Activated B cell treated with CpG ODN at 0.5 μM for 24 hours (primary cell): ENCODE measurements at regions of chr17 and their contacts with region 1.

Region 1: DNA sequence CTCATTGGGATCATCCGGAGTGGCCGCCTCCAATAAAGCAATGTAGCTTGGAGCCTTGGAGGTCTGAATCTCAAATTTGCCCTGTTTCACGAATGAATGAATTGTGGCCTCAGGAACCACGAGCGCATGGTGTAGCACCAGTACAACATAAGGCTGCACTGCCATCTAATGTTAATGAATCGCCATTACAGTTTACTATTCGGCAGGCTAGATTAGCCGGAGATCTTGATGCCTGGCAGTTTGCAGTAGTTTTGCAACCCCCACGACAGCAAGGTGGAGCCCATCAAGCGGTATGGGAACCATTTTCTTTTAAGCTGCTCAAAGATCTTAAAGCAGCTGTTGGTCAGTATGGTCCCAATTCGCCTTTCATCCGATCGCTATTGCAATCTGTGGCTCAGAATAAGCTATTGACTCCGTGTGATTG is 18.8 kb downstream of the ALOX15B start:
- DNase-seq: no peak
- ATAC-seq: peak; percentile 80
- H3K4me3 Mint-ChIP-seq: no peak overlapping the region
- H3K27ac Mint-ChIP-seq: no peak overlapping the region
- H3K4me1 Mint-ChIP-seq: peaks cover 25% of the 10 kb centered on the region
- H3K27me3 Mint-ChIP-seq: peaks cover 19% of the 10 kb centered on the region
- CTCF ChIP-seq: no peak

Region 2: DNA sequence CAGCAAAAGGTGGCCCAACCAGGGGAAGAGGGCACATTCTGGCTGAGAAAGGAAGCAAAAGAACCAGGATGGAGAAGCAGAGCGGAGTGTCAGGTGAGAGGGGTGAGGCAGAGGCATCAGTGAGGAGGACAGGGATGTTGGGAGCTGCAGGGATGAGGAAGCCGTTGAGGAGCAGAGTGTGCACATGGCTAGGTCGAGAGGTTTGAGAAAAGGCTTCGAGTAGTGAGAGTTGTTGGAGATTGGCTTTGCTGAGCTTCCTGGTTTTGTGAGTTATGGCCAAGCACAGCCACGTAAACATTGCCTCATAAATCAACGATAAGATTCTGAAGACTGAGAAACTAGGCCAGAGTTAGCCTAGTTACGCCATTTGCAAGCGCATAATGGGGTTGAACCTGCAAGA is 313.3 kb before region 1 on chr17:
- CTCF ChIA-PET with region 1: interaction called, 23 read pairs
- POLR2A ChIA-PET with region 1: no interaction called
- intact Hi-C with region 1: loop called (anchors 1 kb)
- DNase-seq: no peak
- ATAC-seq: no peak
- H3K4me3 Mint-ChIP-seq: no peak overlapping the region
- H3K27ac Mint-ChIP-seq: no peak overlapping the region
- H3K4me1 Mint-ChIP-seq: no peaks in the 10 kb centered on the region
- H3K27me3 Mint-ChIP-seq: peaks cover 13% of the 10 kb centered on the region
- CTCF ChIP-seq: no peak

Region 3: DNA sequence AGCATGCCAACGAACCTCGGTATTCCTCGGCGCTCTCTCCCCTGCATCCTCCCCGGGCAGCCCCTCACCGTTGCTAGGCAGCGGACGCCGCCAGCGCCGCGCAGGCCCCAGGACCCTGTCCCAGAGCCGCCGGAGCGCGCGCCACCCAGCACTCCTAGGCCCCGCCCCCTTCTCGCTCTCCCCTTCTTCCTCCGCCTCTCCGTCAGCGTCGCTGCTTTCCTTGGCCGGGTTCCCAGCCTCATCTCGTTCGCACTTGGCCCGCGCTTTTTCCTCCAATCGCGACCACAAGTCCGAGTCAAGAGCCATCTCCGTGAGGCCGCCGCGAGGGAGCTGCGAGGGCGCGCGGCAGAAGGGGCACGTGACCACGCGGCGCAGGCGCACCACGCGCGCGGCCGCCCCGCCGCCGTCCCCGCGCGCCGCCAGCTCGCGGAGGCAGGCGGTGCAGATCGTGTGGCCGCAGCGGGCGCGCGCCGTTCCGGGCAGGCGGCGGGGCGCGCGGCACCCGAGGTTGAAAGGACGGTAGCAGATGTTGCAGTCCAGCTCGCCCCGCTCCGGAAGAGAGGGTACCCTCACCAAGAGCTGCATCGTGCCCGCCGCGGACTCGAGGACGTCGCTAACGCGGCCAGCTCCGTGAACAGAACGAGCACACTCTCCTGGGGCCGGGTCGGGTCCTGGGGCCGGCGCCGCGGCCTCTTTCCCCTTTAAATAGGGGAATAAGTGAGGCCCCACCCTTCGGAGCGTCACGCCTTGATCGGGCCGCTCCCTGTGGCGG is 141.9 kb before region 1 on chr17 and contains the start of gene RNF227:
- CTCF ChIA-PET with region 1: interaction called, 12 read pairs
- POLR2A ChIA-PET with region 1: interaction called, 3 read pairs
- intact Hi-C with region 1: loop called (anchors 1 kb)
- DNase-seq: peak; percentile 81
- ATAC-seq: peak; percentile 83
- H3K4me3 Mint-ChIP-seq: peak within 1 kb of the TSS; percentile 91
- H3K27ac Mint-ChIP-seq: peak within 1 kb of the TSS; percentile 87
- H3K4me1 Mint-ChIP-seq: peaks cover 23% of the 10 kb centered on the region
- H3K27me3 Mint-ChIP-seq: no peaks in the 10 kb centered on the region
- CTCF ChIP-seq: no peak
- total RNA-seq, gene RNF227: 2.5 and 2.8 TPM in 2 replicates

Region 4: GRCh38 chr17:8073627-8074484 is 16.2 kb after region 1 on chr17:
- CTCF ChIA-PET with region 1: interaction called, 52 read pairs
- POLR2A ChIA-PET with region 1: interaction called, 4 read pairs
- intact Hi-C with region 1: loop called (anchors 1 kb)
- DNase-seq: peak; percentile 83
- ATAC-seq: peak; percentile 99
- H3K4me3 Mint-ChIP-seq: peak overlapping the region; percentile 78
- H3K27ac Mint-ChIP-seq: peak overlapping the region; percentile 78
- H3K4me1 Mint-ChIP-seq: peaks cover 31% of the 10 kb centered on the region
- H3K27me3 Mint-ChIP-seq: peaks cover 45% of the 10 kb centered on the region
- CTCF ChIP-seq: peak; percentile 56

Region 5: DNA sequence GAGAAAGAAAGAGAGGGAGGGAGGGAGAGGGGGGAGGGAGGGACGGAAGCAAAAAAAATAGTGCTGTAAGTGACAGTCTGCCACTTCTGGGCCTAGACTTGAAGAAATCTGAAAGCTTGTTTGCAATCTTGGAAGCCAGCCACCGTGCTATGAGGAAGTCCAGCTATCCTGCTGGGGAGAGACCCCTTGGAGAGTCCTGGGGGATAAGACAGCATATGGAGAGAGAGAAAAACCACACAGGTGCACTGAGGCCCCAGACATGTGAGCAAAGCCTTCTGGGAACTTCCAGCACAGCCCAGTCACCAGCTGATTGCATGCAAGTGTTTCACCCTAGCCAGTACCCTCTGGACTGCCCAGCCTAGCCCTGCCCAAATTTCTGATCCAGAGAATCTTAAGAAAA is 42.4 kb after region 1 on chr17:
- CTCF ChIA-PET with region 1: no interaction called
- POLR2A ChIA-PET with region 1: no interaction called
- intact Hi-C with region 1: no loop called
- DNase-seq: no peak
- ATAC-seq: no peak
- H3K4me3 Mint-ChIP-seq: no peak overlapping the region
- H3K27ac Mint-ChIP-seq: no peak overlapping the region
- H3K4me1 Mint-ChIP-seq: no peaks in the 10 kb centered on the region
- H3K27me3 Mint-ChIP-seq: peaks cover 5% of the 10 kb centered on the region
- CTCF ChIP-seq: no peak

Region 6: GRCh38 chr17:8118769-8119580 is 61.3 kb after region 1 on chr17:
- CTCF ChIA-PET with region 1: interaction called, 37 read pairs
- POLR2A ChIA-PET with region 1: interaction called, 4 read pairs
- intact Hi-C with region 1: no loop called
- DNase-seq: peak; percentile 81
- ATAC-seq: peak; percentile 68
- H3K4me3 Mint-ChIP-seq: peak overlapping the region; percentile 93
- H3K27ac Mint-ChIP-seq: peak overlapping the region; percentile 96
- H3K4me1 Mint-ChIP-seq: peaks cover 58% of the 10 kb centered on the region
- H3K27me3 Mint-ChIP-seq: peaks cover 56% of the 10 kb centered on the region
- CTCF ChIP-seq: peak; percentile 26

Region 7: GRCh38 chr17:8131844-8132441 is 74.2 kb after region 1 on chr17:
- CTCF ChIA-PET with region 1: no interaction called
- POLR2A ChIA-PET with region 1: no interaction called
- intact Hi-C with region 1: no loop called
- DNase-seq: no peak
- ATAC-seq: no peak
- H3K4me3 Mint-ChIP-seq: no peak overlapping the region
- H3K27ac Mint-ChIP-seq: no peak overlapping the region
- H3K4me1 Mint-ChIP-seq: peaks cover 5% of the 10 kb centered on the region
- H3K27me3 Mint-ChIP-seq: peaks cover 8% of the 10 kb centered on the region
- CTCF ChIP-seq: no peak

Region 8: GRCh38 chr17:8300627-8301242 is 243.0 kb after region 1 on chr17:
- CTCF ChIA-PET with region 1: interaction called, 58 read pairs
- POLR2A ChIA-PET with region 1: interaction called, 3 read pairs
- intact Hi-C with region 1: loop called (anchors 1 kb)
- DNase-seq: peak; percentile 30
- ATAC-seq: peak; percentile 97
- H3K4me3 Mint-ChIP-seq: no peak overlapping the region
- H3K27ac Mint-ChIP-seq: peak overlapping the region; percentile 46
- H3K4me1 Mint-ChIP-seq: peaks cover 8% of the 10 kb centered on the region
- H3K27me3 Mint-ChIP-seq: no peaks in the 10 kb centered on the region
- CTCF ChIP-seq: no peak

Region 9: GRCh38 chr17:8745586-8746500 is 688.1 kb after region 1 on chr17:
- CTCF ChIA-PET with region 1: interaction called, 6 read pairs
- POLR2A ChIA-PET with region 1: no interaction called
- intact Hi-C with region 1: loop called (anchors 2 kb)
- DNase-seq: peak; percentile 84
- ATAC-seq: peak; percentile 81
- H3K4me3 Mint-ChIP-seq: peak overlapping the region; percentile 85
- H3K27ac Mint-ChIP-seq: peak overlapping the region; percentile 77
- H3K4me1 Mint-ChIP-seq: peaks cover 10% of the 10 kb centered on the region
- H3K27me3 Mint-ChIP-seq: no peaks in the 10 kb centered on the region
- CTCF ChIP-seq: peak; percentile 96